WTC11 (cell line): ENCODE measurements at regions of chr10 and their contacts with region 1.

Region 1: GRCh38 chr10:73529089-73529832 is 33.4 kb upstream of the PPP3CB start:
- DNase-seq: peak; percentile 39
- ATAC-seq: peak; percentile 98
- H3K4me3 Mint-ChIP-seq: no peak overlapping the region
- H3K27ac Mint-ChIP-seq: no peak overlapping the region; the same call in 1 of the 2 replicates
- H3K4me1 Mint-ChIP-seq: no peaks in the 10 kb centered on the region
- H3K27me3 Mint-ChIP-seq: no peaks in the 10 kb centered on the region
- CTCF ChIP-seq: peak; percentile 73

Region 2: GRCh38 chr10:73545357-73545756 is 16.1 kb after region 1 on chr10:
- CTCF ChIA-PET with region 1: no interaction called
- POLR2A ChIA-PET with region 1: no interaction called
- DNase-seq: no peak
- ATAC-seq: no peak
- H3K4me3 Mint-ChIP-seq: no peak overlapping the region
- H3K27ac Mint-ChIP-seq: no peak overlapping the region
- H3K4me1 Mint-ChIP-seq: no peaks in the 10 kb centered on the region
- H3K27me3 Mint-ChIP-seq: no peaks in the 10 kb centered on the region
- CTCF ChIP-seq: no peak

Region 3: DNA sequence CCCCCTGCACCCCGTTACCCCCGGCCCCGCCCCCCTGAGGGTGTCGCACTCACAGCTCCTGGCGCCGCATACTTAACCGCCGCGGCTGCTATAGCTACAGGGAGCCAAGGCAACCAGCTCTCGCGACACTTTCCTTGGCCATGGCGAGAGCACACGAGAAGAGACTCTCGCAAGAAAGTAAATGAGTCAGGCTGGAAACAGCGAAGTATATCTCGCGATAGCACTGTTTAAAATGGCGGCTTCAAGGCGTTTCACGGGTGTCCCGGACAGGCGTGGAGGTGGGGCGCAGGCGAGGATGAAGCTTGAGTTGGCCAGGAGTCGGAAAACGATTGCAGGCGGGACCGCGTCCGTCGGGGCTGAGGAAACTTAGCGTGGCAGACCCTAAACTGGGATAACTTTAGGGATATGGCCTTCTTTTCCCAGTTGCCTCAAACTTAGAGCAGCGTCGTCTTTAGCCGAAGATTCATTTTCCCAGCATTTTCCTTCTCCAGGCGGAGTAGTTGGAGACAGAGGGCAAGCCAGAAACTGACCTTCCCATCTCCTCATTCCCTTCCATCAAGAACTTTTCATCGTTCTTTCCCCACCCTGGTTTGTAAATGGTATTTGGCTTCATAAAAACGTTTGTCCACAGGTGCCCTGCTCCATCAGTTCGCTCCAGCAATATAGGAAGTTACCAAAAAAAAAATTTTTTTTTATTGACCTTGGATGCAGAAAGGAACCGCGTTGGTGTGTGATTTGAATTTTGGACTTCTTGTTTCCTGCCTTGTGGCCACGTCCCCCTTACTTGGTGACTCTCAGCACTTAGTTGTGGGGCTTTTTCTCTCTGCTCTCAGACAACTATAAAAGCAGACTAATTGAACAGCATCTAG is 96.9 kb after region 1 on chr10:
- CTCF ChIA-PET with region 1: interaction called, 12 read pairs
- POLR2A ChIA-PET with region 1: no interaction called
- DNase-seq: peak; percentile 93
- ATAC-seq: peak; percentile 96
- H3K4me3 Mint-ChIP-seq: peak overlapping the region; percentile 97
- H3K27ac Mint-ChIP-seq: peak overlapping the region; percentile 96
- H3K4me1 Mint-ChIP-seq: peaks cover 20% of the 10 kb centered on the region
- H3K27me3 Mint-ChIP-seq: no peaks in the 10 kb centered on the region; the same call in 1 of the 2 replicates
- CTCF ChIP-seq: no peak

Region 4: DNA sequence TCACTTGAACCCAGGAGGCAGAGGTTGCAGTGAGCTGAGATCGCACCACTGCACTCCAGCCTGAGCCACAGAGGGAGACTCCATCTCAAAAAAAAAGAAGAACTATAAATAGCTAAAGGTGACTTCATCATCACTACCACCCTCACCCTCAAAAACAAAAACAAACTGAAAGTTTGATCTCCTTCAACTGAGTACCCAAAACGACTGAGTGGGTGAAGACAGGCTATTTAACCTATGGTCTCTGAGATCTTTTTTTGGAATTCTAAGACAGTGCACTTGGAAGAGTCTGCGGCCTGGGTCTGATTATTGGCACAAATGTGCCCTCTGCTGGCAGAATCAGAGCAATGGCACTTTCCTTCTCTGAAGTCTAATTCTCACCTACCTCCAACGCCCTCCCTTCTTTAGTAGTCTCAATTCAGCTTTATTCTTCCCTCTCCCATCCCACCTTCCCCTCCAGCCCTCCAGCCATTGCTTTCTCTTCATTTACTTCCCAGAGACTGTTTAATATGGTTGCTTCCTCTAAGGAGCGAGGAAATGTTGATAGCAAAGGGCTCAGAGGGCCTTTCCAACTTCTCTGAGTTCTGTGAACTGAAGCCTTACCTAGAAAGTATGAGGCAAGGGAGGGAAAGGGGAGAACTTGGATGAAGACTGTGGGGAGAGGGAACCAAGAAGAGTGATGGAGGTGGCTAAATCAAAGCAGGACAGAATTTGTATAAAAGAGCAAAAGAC is 114.9 kb after region 1 on chr10:
- CTCF ChIA-PET with region 1: interaction called, 77 read pairs
- POLR2A ChIA-PET with region 1: no interaction called
- DNase-seq: peak; percentile 57
- ATAC-seq: peak; percentile 37
- H3K4me3 Mint-ChIP-seq: no peak overlapping the region
- H3K27ac Mint-ChIP-seq: no peak overlapping the region; the same call in 1 of the 2 replicates
- H3K4me1 Mint-ChIP-seq: peaks cover 27% of the 10 kb centered on the region
- H3K27me3 Mint-ChIP-seq: no peaks in the 10 kb centered on the region; the same call in 1 of the 2 replicates
- CTCF ChIP-seq: peak; percentile 81